Cardiac septum (tissue), 1 donor: ENCODE measurements at regions of chr1 and their contacts with region 1.

Region 1: DNA sequence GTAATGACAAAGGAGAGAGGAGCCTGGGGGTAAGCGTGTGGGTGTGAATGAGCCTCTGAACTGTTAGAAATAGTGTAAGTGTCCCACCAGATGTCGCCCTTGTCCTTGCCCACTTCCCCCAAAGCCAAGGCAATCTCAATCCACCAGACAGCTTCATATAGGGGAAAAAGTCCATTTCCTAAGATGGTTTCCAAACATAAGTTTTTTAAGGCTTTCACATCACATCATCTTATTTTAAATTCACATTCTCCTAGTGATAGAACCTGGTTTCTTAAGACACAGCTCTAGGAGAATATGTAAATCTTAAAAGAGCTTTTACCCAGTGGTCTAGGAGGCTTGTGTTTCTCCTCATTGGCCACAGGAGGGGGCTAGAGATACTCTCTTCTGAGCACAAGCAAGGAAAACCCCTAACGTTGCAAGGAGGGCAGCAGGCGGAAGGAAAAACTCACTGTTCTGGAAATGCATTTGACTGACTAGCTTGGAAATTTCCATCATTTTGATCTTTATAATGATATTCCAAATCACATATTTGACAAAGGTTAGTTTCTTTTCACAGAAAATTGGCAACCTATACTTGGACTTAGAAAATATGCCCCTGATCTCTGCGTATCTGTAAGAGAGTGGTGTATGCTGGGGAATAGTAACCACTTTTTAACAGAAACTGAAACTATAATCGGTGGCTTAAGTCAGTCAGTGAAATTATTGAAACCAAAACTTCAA is 51.9 kb upstream of the LPAR3 start:
- DNase-seq: no peak

Region 2: DNA sequence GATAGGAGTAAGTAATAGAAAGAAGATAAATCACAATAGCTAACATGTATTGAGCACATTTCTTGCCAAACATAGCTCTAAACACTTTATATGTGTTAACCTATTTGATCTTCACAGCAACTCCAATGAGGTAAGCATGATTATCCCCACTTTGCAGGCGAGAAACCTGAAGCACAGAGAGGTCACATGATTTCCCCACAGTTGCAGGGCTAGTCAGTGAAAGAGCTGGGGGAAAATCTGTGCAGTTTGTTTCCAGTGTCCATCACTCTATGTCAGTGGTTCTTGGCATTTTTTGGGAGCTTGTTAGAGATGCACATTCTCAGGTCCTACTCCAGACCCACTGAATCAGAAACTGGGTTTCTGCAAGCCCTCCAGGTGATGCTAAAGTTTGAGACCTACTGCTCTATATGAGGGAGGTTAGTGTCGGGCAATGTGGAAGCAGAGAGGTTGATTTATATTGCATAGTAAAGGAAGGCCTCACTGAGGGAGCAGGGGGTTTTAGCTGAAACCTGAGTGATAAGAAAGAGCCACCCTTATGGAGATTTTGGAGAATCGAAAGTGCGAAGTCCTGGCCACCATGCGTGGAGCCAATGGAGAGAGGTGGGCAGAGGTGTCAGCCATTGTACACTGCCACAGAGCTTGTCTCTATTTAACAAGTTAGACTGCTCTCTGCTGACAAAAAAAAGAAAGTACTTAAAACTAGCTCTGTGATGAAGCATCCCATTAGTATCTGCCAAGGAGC is 82.5 kb after region 1 on chr1:
- intact Hi-C with region 1: loop called (anchors 2 kb)
- DNase-seq: no peak

Region 3: GRCh38 chr1:85061711-85062424 is 116.9 kb after region 1 on chr1:
- intact Hi-C with region 1: loop called (anchors 5 kb)
- DNase-seq: peak; percentile 90

Region 4: GRCh38 chr1:85259118-85259911 is 314.4 kb after region 1 on chr1 and contains the start of gene C1orf52:
- intact Hi-C with region 1: loop called (anchors 2 kb)
- DNase-seq: peak; percentile 97
- total RNA-seq, gene C1orf52: 17.4 TPM